SK-MEL-5 (cell line): ENCODE measurements at regions of chr15 and their contacts with region 1.

Region 1: DNA sequence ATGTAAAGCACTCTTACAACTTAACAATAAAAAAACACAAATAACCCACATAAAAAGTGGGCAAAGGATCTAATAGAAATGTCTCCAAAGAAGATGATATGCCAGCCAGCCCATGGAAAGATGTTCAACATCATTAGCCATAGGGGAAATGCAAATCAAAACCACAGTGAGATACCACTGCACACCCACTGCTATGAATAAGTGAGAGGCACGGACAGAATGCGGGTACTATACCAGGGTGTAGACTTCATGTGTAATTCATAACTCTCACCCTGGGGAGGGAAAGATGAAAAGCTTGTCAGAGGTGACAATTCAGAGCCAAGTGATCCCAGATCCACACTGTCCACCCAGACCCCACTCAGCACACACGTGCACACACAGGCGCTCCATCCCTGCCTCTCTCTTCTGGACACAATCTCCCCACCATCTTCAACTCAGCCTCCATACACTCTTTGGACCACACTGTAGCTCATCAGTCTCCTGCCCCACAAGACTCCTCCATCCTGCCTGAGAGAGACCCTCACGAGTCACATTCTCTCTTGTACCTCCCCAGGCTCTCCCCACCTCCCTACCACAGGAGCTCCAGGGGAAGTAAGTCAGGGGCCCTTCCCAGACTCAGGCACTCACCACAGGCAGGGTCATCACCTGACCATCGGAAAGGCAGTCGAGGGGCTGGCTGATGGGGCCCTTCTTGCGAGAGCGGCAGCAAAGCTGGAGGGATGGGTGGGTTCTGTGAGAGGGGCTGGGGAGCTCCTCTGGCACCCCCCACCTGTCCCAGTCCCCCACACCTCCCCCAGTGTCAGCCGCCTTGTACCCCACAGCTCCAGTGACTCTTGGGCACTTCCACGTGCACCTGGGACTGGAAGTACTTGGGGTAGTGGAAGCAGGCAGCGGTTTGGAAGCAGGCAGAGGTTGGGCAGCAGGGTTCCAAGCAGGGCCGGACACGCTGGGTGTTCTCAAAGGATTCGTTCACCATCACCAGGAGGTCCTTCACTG is 21.3 kb downstream of the PLA2G4E start:
- DNase-seq: no peak

Region 2: GRCh38 chr15:42042602-42043400 is 43.2 kb after region 1 on chr15:
- in situ Hi-C with region 1: loop called (anchors 5 kb)
- DNase-seq: no peak

Region 3: DNA sequence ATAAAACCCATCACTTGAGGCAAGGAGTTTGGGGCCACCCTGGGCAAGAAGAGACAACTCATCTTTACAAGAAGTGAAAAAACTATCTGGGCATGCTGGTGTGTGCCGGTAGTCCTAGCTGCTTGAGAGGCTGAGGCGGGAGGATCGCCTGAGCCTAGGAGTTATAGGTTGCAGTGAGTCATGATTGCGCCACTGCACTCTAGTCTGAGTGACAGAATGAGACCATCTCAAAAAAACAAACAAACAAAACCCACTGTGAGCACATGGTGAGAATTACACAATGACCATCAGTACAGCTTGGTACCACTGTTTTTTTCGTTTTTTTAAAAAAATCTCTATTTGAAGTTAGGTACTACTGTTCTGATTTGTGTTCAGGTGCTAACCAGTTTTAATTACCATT is 194.9 kb after region 1 on chr15:
- in situ Hi-C with region 1: no loop called
- DNase-seq: no peak